ENCODE measurements at regions of chr5 and their contacts with region 1.

Region 1: DNA sequence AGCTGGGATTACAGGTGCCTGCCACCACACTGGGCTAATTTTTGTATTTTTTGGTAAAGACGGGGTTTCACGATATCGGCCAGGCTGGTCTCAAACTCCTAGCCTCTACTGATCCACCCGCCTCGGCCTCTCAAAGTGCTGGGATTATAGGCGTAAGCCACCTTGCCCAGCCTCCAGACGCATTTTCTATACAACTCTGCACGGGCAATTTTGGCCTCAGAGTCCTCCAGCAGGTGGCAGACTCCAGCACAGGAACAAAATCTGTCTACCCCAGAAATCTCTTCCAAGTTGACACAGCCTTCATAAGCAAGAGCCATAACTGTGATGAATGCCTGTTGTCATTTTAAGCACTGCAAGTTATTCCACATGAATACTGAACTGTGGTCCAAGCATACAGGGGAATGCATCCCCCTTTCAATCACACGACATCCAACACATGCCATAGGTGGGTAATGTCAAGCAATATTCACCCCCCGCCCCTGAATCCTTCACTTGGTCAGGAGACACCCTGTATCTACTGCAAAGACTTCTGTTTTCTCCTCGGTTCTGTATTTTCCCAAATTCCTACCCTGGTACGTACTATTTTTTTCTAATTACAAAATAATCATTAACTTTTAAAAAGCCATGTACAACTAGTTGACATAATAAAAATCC is 50.8 kb downstream of the ALDH7A1 start:
- DNase-seq: peak in 27 of 35 experiments; percentile 4 to 37 (median 23)
- ATAC-seq: no peak
- H3K4me3 ChIP-seq: no peak overlapping the region
- H3K4me3 Mint-ChIP-seq: no peak overlapping the region
- H3K27ac ChIP-seq: no peak overlapping the region
- H3K27ac Mint-ChIP-seq: no peak overlapping the region
- H3K4me1 ChIP-seq: no peaks in the 10 kb centered on the region
- H3K4me1 Mint-ChIP-seq: no peaks in the 10 kb centered on the region
- H3K27me3 ChIP-seq: no peaks in the 10 kb centered on the region
- H3K27me3 Mint-ChIP-seq: no peaks in the 10 kb centered on the region

Region 2: GRCh38 chr5:126354012-126354857 is 190.0 kb before region 1 on chr5:
- CTCF ChIA-PET with region 1: interaction called, 38 to 76 read pairs
- POLR2A ChIA-PET with region 1: no interaction called
- DNase-seq: peak in 2 of 35 experiments; percentile 1 to 69
- ATAC-seq: peak in 3 of 4 experiments; percentile 53 to 67 (median 64)
- H3K4me3 ChIP-seq: peak overlapping the region in 1 of 2 donors; percentile 48
- H3K4me3 Mint-ChIP-seq: peak overlapping the region; percentile 22 to 68 (median 41)
- H3K27ac ChIP-seq: no peak overlapping the region
- H3K27ac Mint-ChIP-seq: peak overlapping the region in 1 of 2 donors; percentile 11
- H3K4me1 ChIP-seq: peaks cover 2 to 7% of the 10 kb centered on the region in 2 experiments
- H3K4me1 Mint-ChIP-seq: peaks cover 13 to 18% (median 14%) of the 10 kb centered on the region in 3 donors
- H3K27me3 ChIP-seq: no peaks in the 10 kb centered on the region
- H3K27me3 Mint-ChIP-seq: peaks cover 0 to 2% of the 10 kb centered on the region in 2 donors

Region 3: DNA sequence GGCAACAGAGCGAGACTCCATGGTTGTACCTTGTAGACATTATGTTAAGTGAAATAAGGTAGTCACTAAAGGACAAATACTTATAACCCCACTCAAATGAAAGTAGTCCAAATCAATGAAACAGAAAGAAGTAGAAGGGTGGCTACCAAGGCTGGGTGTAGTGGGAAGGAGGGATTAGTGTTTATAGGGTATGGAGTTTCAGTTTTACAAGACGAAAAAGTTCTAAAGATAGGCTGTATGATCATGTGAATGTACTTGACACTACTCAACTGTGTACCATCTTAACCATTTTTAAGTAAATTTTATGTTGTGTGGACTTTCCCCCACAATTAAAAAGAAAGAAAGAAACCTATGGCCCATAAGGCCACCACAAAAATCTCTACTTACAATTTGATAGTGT is 18.6 kb after region 1 on chr5:
- CTCF ChIA-PET with region 1: no interaction called
- POLR2A ChIA-PET with region 1: interaction called in 1 of 2 experiments, 16 read pairs
- DNase-seq: no peak
- ATAC-seq: no peak
- H3K4me3 ChIP-seq: no peak overlapping the region
- H3K4me3 Mint-ChIP-seq: no peak overlapping the region
- H3K27ac ChIP-seq: no peak overlapping the region
- H3K27ac Mint-ChIP-seq: no peak overlapping the region
- H3K4me1 ChIP-seq: no peaks in the 10 kb centered on the region
- H3K4me1 Mint-ChIP-seq: no peaks in the 10 kb centered on the region
- H3K27me3 ChIP-seq: no peaks in the 10 kb centered on the region
- H3K27me3 Mint-ChIP-seq: no peaks in the 10 kb centered on the region

Region 4: DNA sequence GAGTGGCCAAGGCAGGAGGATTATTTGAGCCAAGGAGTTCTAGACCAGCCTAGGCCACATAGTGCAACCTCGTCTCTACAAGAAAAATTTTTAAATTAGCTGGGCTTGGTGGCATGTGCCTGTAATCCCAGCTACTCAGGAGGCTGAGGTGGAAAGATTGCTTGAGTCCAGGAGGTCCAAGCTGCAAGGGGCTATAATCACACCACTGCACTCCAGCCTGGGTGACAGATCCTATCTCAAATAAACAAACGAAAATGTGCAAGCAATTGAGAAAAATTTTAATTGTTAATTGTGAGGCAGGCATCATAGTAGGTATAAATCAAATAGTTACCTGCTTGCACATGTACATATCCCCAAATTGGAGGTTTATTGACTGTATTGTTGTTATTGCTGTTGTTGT is 35.5 kb after region 1 on chr5:
- CTCF ChIA-PET with region 1: interaction called in 1 of 2 experiments, 13 read pairs
- POLR2A ChIA-PET with region 1: interaction called in 1 of 2 experiments, 3 read pairs
- DNase-seq: no peak
- ATAC-seq: no peak
- H3K4me3 ChIP-seq: no peak overlapping the region
- H3K4me3 Mint-ChIP-seq: no peak overlapping the region
- H3K27ac ChIP-seq: no peak overlapping the region
- H3K27ac Mint-ChIP-seq: no peak overlapping the region
- H3K4me1 ChIP-seq: no peaks in the 10 kb centered on the region
- H3K4me1 Mint-ChIP-seq: no peaks in the 10 kb centered on the region
- H3K27me3 ChIP-seq: no peaks in the 10 kb centered on the region
- H3K27me3 Mint-ChIP-seq: peaks cover 0 to 4% of the 10 kb centered on the region in 2 donors

Measured in T-cell (primary cell).